Activated B cell treated with CpG ODN at 0.5 μM for 24 hours (primary cell): ENCODE measurements at regions of chr5 and their contacts with region 1.

Region 1: DNA sequence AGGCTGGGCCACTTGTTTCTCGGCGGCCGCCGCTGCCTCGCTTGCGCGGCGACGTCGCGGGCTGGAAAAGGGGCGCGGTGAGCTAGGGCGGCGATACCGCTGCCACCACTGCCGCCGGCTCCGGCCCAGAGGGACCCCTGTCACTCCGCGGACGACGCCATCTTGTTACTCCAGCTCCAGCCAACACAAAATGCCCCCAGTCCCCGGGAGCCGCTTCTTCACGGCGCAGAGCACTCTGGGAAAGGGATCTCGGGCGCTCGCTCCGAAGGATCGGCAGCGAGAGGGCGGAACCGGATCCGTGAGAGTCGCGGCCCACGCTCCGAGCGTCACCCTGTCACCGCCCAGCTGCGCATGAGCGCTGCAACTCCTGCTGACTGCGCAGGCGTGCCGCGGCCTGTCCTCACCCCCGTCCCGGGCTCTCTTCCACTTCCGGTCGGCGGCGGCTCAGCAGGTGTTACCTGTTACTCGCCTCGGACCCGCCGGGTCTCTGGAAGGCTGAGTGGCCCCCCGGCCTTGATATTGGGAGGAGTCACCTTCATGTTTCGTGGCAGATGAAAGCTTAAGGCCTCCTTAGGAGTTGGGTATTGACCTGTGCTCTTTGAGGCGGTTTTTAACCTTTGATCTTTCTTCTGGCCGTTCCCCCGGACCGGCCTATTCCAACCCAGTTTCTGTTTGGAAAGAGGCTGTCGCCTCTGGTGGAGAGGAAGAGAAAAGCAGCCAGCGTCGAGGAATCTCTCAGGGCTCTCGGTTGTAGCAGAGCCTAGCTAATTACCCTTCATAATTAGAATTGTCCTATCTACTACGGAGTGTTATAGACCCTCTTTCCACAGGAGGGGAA is at the start of gene CSNK1A1:
- DNase-seq: peak; percentile 98
- ATAC-seq: peak; percentile 79
- H3K4me3 Mint-ChIP-seq: peak within 1 kb of the TSS; percentile 92
- H3K27ac Mint-ChIP-seq: peak within 1 kb of the TSS; percentile 96
- H3K4me1 Mint-ChIP-seq: peaks cover 36% of the 10 kb centered on the region
- H3K27me3 Mint-ChIP-seq: no peaks in the 10 kb centered on the region
- CTCF ChIP-seq: no peak
- total RNA-seq, gene CSNK1A1: 120 and 133 TPM in 2 replicates

Region 2: GRCh38 chr5:147805030-147805454 is 1746.4 kb before region 1 on chr5:
- CTCF ChIA-PET with region 1: no interaction called
- POLR2A ChIA-PET with region 1: no interaction called
- intact Hi-C with region 1: loop called (anchors 5 kb)
- DNase-seq: no peak
- ATAC-seq: peak; percentile 96
- H3K4me3 Mint-ChIP-seq: peak overlapping the region; percentile 25
- H3K27ac Mint-ChIP-seq: peak overlapping the region; percentile 62
- H3K4me1 Mint-ChIP-seq: peaks cover 23% of the 10 kb centered on the region
- H3K27me3 Mint-ChIP-seq: peaks cover 18% of the 10 kb centered on the region
- CTCF ChIP-seq: no peak

Region 3: GRCh38 chr5:149357370-149358293 is 193.8 kb before region 1 on chr5 and contains the start of gene PCYOX1L:
- CTCF ChIA-PET with region 1: no interaction called
- POLR2A ChIA-PET with region 1: interaction called, 11 read pairs
- intact Hi-C with region 1: loop called (anchors 1 kb)
- DNase-seq: peak; percentile 84
- ATAC-seq: peak; percentile 100
- H3K4me3 Mint-ChIP-seq: peak within 1 kb of the TSS; percentile 92
- H3K27ac Mint-ChIP-seq: peak within 1 kb of the TSS; percentile 65
- H3K4me1 Mint-ChIP-seq: peaks cover 16% of the 10 kb centered on the region
- H3K27me3 Mint-ChIP-seq: no peaks in the 10 kb centered on the region
- CTCF ChIP-seq: no peak
- total RNA-seq, gene PCYOX1L: 6.1 and 9.2 TPM in 2 replicates

Region 4: GRCh38 chr5:149371296-149371962 is 180.0 kb before region 1 on chr5:
- CTCF ChIA-PET with region 1: no interaction called
- POLR2A ChIA-PET with region 1: no interaction called
- intact Hi-C with region 1: no loop called
- DNase-seq: peak; percentile 34
- ATAC-seq: peak; percentile 85
- H3K4me3 Mint-ChIP-seq: no peak overlapping the region
- H3K27ac Mint-ChIP-seq: no peak overlapping the region
- H3K4me1 Mint-ChIP-seq: peaks cover 5% of the 10 kb centered on the region
- H3K27me3 Mint-ChIP-seq: no peaks in the 10 kb centered on the region
- CTCF ChIP-seq: no peak

Region 5: DNA sequence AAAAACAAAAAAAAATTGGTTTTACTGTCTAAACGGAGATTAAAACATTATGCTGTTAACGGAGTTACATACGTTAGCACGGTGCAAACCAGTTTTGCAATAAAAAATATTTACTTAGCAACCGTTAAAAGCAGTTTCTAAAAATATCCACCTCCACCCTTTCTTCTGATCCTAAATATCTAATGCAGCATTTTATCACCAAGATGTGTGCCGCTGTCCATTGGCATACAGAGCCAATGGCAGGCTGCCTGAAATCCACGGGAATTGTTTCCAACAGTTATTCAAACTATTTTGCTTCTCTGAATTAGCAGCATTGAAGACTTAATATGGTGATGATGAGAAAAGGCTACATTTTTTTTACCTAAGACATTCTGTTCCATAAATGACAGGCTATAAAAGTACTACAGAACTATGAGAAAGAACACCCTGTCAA is 61.8 kb before region 1 on chr5:
- CTCF ChIA-PET with region 1: no interaction called
- POLR2A ChIA-PET with region 1: interaction called, 3 read pairs
- intact Hi-C with region 1: loop called (anchors 10 kb)
- DNase-seq: no peak
- ATAC-seq: no peak
- H3K4me3 Mint-ChIP-seq: no peak overlapping the region
- H3K27ac Mint-ChIP-seq: no peak overlapping the region
- H3K4me1 Mint-ChIP-seq: peaks cover 5% of the 10 kb centered on the region
- H3K27me3 Mint-ChIP-seq: no peaks in the 10 kb centered on the region
- CTCF ChIP-seq: no peak

Region 6: DNA sequence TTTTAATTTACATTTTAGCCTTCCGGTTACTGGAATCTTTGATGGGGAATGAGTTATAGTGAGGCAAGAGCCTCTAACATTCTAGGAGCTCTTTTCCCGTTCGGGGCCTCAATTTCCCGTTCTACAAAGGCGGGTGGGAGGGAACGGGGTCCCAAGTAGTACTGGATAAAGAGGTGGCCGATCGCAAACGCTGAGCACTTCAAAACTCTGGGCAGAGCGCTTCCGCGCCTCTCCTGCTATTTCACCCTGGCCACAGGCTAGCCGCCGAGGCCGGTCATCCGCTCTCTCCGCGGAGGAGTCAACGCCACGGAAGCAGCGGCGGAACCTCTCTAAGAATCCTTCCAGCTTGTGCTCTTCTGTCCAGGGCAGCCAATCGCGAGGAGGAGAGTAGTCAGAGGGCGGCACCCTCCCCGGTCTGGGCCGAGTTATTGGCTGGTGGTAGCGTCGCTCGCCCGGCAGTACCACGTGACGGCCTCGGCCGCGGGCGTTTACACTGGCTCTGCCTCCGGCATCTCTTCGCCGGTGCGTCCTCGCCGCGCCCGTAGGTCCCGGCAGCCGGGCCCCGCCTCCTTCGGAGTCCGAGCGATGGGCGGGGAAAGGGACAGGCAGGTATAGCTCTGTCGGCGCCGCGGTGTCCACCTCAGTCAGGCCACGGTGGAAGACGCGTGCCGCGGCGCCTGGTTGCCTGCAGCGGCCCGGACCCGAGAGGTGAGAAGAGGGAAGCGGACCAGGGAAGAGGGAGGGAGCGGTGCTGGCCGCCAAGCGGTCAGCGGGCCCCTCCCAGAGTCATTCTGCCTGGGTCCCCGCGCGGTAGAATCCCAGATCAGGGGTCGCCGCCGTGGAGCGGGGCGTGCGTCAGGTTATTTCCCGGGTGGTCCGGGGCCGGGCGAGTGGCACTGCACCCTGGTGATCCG is 409.1 kb after region 1 on chr5 and contains the start of gene SLC26A2:
- CTCF ChIA-PET with region 1: no interaction called
- POLR2A ChIA-PET with region 1: interaction called, 6 read pairs
- intact Hi-C with region 1: loop called (anchors 1 kb)
- DNase-seq: peak; percentile 88
- ATAC-seq: peak; percentile 97
- H3K4me3 Mint-ChIP-seq: peak within 1 kb of the TSS; percentile 98
- H3K27ac Mint-ChIP-seq: peak within 1 kb of the TSS; percentile 98
- H3K4me1 Mint-ChIP-seq: peaks cover 20% of the 10 kb centered on the region
- H3K27me3 Mint-ChIP-seq: no peaks in the 10 kb centered on the region
- CTCF ChIP-seq: no peak
- total RNA-seq, gene SLC26A2: 8.9 and 11.0 TPM in 2 replicates